GM13976 (cell line): ENCODE measurements at regions of chr10 and their contacts with region 1.

Region 1: DNA sequence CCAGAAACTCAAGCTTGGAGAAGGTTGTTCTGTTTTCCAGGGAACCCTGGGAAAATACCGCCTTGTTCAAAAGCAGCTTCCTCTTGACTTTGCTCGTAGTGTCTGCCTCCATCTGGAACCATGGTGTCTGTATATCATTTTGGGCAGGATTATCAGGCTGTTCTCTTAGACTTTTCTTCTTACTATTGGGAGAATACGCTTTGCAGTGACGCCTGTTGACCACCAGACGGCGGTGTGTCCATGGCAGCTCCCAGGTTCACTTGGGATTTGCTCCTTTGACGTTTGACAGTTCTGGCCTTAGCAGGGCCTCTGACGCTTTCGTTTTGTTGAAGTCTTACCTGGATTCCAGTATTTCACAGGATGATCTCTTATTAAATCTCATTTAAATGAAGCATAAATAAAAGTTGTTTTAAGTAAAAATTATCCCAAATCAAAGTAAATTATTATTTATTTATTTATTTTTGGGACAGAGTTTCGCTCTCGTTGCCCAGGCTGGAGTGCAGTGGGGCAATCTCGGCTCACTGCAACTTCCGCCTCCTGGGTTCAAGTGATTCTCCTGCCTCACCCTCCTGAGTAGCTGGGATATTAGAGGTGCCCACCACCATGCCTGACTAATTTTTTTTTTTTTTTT is 41.8 kb upstream of the GJD4 start:
- DNase-seq: peak; percentile 75
- CTCF ChIP-seq: peak; percentile 98

Region 2: DNA sequence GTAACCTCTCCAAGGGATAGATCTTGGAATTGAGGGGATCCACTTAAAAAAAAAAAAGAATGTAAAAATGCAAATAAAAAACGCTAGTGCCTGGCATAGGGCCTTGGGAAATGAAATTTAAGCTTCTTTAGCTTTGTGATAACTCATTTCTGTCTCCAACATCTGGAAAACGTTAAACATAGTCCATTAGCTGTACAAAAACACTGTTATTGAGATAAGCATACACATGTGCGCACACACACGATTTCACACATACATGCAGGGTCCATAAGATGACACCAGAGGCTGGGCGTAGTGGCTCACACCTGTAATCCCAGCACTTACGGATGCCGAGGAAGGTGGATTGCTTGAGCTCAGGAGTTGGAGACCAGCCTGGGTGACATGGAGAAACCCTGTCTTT is 459.5 kb before region 1 on chr10:
- in situ Hi-C with region 1: loop called (anchors 25 kb)
- DNase-seq: no peak
- CTCF ChIP-seq: no peak

Region 3: DNA sequence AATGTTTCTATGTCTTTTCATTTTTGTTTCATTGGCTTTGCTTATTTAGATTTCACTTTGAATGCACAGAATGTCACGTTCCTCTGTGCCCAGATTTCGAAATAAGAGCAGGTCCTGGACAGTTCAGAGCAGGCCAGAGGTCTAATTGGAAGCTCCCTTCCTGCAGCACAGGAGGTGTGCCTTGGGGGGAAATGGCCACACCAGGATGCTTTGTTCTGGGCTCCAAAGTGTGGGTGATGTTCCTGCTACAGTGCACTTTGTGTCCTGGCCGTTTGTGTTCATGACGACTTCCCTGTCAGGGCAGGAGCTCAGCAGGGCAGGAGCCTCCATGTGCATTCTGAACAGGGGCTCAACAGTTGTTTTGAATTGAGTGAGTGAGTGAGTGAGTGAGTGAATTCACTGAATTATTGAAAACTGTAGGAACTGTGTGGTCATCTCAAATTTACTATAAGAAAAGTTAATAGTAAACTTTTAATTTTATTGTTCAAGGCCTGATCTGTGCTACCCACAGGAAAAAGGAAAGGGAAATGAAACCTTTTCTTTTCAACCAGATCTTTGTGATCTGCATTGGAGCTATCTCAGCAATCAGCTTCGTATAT is 67.8 kb before region 1 on chr10:
- in situ Hi-C with region 1: no loop called
- DNase-seq: no peak
- CTCF ChIP-seq: no peak